ENCODE measurements at regions of chr14 and their contacts with region 1.

Region 1: DNA sequence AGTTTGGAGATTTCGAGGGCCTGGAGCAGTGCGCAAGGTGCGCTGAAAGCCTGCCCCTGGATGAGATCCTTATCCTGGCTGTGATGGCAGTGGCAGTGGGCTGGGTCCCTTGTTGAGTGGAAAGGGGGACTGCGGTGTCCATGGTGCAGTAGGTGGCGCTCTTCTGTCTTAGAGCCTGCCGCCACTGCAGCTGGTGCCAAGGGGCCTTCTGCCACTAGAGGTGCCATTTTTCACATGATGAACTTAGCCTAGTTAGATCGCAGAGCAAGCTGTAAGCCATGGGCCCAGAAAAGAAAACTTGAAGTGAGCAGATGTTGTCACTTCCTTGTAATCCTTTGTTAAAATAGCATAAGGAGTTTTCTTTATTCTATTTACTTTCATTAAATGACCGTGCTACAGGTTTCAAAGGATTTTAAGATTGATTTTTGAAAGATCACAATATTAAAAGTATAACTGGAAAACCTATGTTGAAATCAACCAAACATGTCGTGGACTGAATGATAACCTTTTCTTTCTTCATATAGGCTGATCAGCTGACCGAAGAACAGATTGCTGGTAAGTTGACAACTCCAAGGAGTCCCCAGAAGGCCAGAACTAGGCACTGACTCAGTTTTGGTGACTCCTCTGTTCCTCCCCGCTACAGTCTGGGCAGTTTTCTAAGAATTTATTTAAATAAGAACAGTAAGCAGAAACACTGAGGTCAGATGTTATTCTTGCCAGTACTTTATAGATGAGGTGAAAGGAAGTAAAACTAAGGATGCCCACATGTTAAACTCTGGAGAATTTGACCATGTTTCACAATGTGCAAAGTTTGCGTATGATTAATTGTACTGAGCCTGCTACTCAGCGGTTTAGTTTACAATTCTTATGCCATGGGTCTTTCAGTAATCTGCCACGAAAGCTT is 3.0 kb downstream of the CALM1 start:
- DNase-seq: peak; percentile 88
- H3K4me3 ChIP-seq: peak overlapping the region; percentile 99
- H3K27ac ChIP-seq: peak overlapping the region; percentile 96
- H3K4me1 ChIP-seq: peaks cover 79% of the 10 kb centered on the region
- H3K27me3 ChIP-seq: no peaks in the 10 kb centered on the region
- CTCF ChIP-seq: peak; percentile 99

Region 2: DNA sequence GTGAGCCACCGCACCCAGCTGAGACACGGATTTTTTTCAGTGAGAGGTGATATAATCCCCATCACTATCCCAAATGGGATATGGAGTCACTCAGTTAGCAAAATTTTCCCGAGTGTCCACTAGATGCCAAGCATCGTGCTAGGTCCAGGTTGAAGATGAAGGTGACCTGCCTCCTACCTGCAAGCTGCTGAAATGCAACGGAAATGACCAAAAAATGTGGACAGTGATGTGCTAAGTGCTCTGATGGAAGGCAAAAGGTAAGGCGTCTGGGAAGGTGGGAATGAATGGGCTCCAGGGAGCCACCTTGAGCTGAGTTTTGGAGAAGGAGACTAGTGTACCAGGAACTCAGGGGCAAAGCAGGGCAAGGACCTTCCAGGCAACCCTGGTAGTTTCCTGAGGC is 61.6 kb after region 1 on chr14:
- intact Hi-C with region 1: no loop called
- DNase-seq: no peak
- H3K4me3 ChIP-seq: no peak overlapping the region
- H3K27ac ChIP-seq: no peak overlapping the region
- H3K4me1 ChIP-seq: no peaks in the 10 kb centered on the region
- H3K27me3 ChIP-seq: no peaks in the 10 kb centered on the region
- CTCF ChIP-seq: no peak

Region 3: DNA sequence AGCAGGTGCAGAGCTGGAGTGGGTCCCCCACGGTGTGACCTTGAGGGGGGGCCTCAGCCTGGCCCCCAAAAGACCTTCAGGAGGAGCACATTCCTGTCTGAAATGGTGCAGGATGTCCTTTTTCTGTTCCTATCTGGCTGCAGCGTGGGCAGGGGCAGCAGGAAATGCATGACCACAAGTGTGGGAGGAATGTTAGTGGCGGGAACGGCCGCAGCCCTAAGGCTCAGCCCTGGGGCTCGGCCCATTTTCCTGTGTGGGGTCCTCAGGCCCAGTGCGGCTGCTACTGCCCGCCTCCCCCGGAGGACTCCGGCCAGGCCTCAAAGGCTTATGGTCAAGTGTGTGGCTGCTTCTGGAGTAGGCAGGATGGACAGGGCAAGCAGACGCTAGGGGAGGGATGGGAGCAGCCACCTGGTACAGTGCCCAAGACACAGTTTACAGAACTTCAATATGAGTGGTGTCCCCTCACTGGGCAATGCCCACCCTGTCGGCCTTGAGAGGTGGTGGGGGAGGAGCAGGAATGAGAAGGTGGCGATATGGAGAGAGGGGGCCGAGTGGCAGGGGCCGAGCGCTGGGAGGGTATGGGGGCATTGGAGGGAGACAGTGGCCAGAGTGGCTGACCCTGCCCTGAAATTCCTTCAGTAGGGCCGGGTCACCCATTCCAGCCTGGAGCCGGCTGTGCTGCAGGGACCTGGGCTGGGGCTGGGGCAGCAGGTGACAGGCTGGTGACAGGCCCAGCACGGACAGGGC is 134.5 kb after region 1 on chr14:
- intact Hi-C with region 1: loop called (anchors 10 kb)
- DNase-seq: no peak
- H3K4me3 ChIP-seq: no peak overlapping the region
- H3K27ac ChIP-seq: peak overlapping the region; percentile 73
- H3K4me1 ChIP-seq: peaks cover 44% of the 10 kb centered on the region
- H3K27me3 ChIP-seq: no peaks in the 10 kb centered on the region
- CTCF ChIP-seq: no peak

Region 4: DNA sequence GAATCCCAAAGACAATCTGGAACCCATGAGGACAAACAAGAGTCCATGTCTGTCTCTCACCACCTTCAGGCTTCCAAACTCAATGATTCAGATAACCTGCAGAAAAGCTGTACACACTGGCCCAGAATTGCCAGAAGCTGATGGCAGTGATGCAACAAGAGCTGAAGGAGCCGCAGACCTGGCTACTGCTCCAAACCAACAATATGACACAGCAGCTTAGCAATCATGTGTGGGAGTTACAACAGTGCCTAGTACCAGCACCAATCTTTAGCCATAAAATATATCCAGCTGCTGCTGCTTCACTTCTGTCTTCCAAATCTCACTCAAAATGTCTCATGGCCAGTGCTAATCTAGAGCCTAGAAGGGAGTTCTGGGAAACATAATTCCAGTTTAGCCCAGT is 638.6 kb after region 1 on chr14:
- intact Hi-C with region 1: no loop called
- DNase-seq: no peak
- H3K4me3 ChIP-seq: no peak overlapping the region
- H3K27ac ChIP-seq: no peak overlapping the region
- H3K4me1 ChIP-seq: peaks cover 14% of the 10 kb centered on the region
- H3K27me3 ChIP-seq: no peaks in the 10 kb centered on the region
- CTCF ChIP-seq: no peak

Region 5: GRCh38 chr14:91444335-91445020 is 1044.7 kb after region 1 on chr14:
- intact Hi-C with region 1: no loop called
- DNase-seq: no peak
- H3K4me3 ChIP-seq: no peak overlapping the region
- H3K27ac ChIP-seq: no peak overlapping the region
- H3K4me1 ChIP-seq: no peaks in the 10 kb centered on the region
- H3K27me3 ChIP-seq: peaks cover 31% of the 10 kb centered on the region
- CTCF ChIP-seq: no peak